Psoas muscle (tissue), 8 donors: ENCODE measurements at regions of chr15 and their contacts with region 1.

Region 1: DNA sequence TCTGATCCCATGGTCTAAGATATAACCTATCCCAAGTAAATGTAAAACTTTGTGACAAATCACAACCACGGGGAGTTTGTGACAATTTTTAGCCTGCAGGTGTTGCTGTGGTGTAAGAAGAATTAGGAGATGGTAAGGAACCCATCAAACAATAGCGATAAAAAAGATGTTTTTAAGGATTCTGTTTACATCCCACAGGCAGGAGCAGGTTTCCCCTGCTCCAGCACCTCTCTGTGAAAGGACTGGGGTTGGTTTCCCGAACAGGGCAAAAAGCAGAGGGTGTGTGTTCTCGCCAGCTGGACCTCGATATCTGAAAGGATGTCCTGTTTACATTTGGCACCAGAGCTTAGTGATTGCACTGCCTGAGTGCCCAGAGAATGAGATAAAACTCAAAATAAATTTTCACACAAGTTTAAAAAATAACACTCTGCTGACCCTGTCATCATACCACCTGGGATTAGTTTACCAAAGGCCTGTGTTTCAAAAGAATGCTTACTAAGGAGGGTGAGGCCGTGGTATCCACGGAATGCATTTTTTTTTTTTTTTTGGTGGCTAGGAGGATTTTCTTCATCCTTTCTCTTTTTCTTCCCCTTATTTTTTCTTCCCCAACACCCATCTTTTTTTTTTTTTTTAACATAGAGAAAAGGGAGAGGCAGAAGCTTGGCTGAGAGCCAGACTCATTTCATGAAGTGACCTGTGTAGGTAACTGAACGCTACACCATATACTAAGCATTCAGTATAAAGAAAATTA is 151.8 kb upstream of the DPH6 start:
- DNase-seq: no peak
- ATAC-seq: peak in 2 of 4 donors; percentile 19 to 40
- H3K4me3 ChIP-seq: no peak overlapping the region
- H3K27ac ChIP-seq: no peak overlapping the region
- H3K4me1 ChIP-seq: peaks cover 18% of the 10 kb centered on the region
- H3K27me3 ChIP-seq: no peaks in the 10 kb centered on the region
- CTCF ChIP-seq: no peak

Region 2: DNA sequence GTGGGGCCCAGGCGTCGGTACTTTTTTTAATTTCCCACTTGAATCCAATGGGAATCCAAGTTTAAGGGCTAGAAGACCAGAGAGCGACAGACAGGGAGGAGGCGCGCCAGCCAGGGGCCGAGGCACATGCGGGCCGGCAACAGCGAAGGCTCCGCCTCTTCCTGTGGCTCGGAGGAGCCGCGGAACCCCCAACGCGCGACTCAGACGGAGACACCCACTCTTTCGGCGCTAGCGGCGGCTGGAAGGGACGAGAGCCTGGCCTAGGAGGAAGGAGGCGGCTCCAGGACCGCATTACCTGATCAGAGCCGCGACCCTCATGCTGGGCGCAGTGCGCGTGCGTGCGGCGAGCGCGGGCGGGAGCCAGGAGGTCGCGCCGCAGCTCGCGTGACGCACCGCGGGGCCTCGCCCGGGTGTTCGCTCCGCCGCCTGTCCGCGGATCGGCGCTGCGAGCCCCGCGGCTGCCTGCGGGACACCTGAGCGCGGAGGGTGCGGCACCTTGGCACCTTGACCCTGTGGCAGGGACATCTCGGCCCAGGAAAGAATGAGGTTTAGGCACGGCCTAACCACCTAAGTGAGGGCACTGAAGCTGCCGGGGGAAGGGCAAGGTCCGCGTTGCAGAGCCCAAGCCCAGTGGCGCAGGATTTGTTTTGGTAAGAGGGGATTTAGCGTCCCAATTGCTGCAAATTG is 151.8 kb before region 1 on chr15 and contains the start of gene DPH6:
- intact Hi-C with region 1: loop called (anchors 10 kb)
- DNase-seq: peak; percentile 85 to 92
- ATAC-seq: peak; percentile 94 to 96 (median 94)
- H3K4me3 ChIP-seq: peak within 1 kb of the TSS; percentile 77
- H3K27ac ChIP-seq: peak within 1 kb of the TSS; percentile 96
- H3K4me1 ChIP-seq: peaks cover 15% of the 10 kb centered on the region
- H3K27me3 ChIP-seq: no peaks in the 10 kb centered on the region
- CTCF ChIP-seq: no peak
- total RNA-seq, gene DPH6: 18.0 to 26.0 (median 20.6) TPM